Naive thymus-derived CD8-positive, alpha-beta T cell (primary cell): ENCODE measurements at regions of chr17 and their contacts with region 1.

Region 1: GRCh38 chr17:10337136-10337535 is 35.7 kb downstream of the MYH13 start:
- DNase-seq: no peak
- ATAC-seq: no peak
- H3K4me3 Mint-ChIP-seq: no peak overlapping the region
- H3K27ac Mint-ChIP-seq: no peak overlapping the region
- H3K4me1 Mint-ChIP-seq: no peaks in the 10 kb centered on the region
- H3K27me3 Mint-ChIP-seq: peaks cover 0 to 5% (median 0%) of the 10 kb centered on the region in 5 donors

Region 2: GRCh38 chr17:10380631-10381408 is 43.7 kb after region 1 on chr17:
- POLR2A ChIA-PET with region 1: interaction called, 10 read pairs
- DNase-seq: no peak
- ATAC-seq: no peak
- H3K4me3 Mint-ChIP-seq: no peak overlapping the region
- H3K27ac Mint-ChIP-seq: no peak overlapping the region
- H3K4me1 Mint-ChIP-seq: no peaks in the 10 kb centered on the region
- H3K27me3 Mint-ChIP-seq: peaks cover 2 to 12% (median 7%) of the 10 kb centered on the region in 5 donors